CD8-positive, alpha-beta memory T cell (primary cell): ENCODE measurements at regions of chr9 and their contacts with region 1.

Region 1: GRCh38 chr9:6549106-6549800 is 96.3 kb downstream of the GLDC start:
- DNase-seq: no peak
- H3K4me3 ChIP-seq: no peak overlapping the region
- H3K4me3 Mint-ChIP-seq: no peak overlapping the region
- H3K27ac ChIP-seq: no peak overlapping the region
- H3K27ac Mint-ChIP-seq: no peak overlapping the region
- H3K4me1 ChIP-seq: no peaks in the 10 kb centered on the region
- H3K4me1 Mint-ChIP-seq: no peaks in the 10 kb centered on the region
- H3K27me3 ChIP-seq: no peaks in the 10 kb centered on the region
- H3K27me3 Mint-ChIP-seq: peaks cover 0 to 3% of the 10 kb centered on the region in 2 donors

Region 2: DNA sequence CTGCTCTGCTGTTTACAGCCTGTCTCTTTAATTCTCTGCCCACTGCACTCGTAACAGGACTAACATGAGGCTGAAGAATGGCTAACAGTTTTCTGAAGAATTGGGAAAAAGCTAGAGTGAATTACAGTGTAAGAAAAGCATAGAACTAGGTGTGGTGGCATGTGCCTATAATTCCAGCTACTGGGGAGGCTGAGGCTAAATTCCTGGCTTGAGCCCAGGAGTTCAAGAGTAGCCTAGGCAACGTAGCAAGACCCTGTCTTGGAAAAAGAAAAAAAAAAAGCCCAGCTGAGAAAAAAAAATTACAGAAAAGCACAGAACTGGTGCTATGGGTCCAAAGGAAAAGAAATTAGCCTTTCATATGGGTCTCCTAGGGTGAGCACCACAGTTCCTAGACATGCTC is 150.2 kb before region 1 on chr9:
- CTCF ChIA-PET with region 1: no interaction called
- POLR2A ChIA-PET with region 1: no interaction called
- DNase-seq: no peak
- H3K4me3 ChIP-seq: no peak overlapping the region
- H3K4me3 Mint-ChIP-seq: no peak overlapping the region
- H3K27ac ChIP-seq: no peak overlapping the region
- H3K27ac Mint-ChIP-seq: no peak overlapping the region
- H3K4me1 ChIP-seq: no peaks in the 10 kb centered on the region
- H3K4me1 Mint-ChIP-seq: no peaks in the 10 kb centered on the region
- H3K27me3 ChIP-seq: no peaks in the 10 kb centered on the region
- H3K27me3 Mint-ChIP-seq: peaks cover 3 to 4% of the 10 kb centered on the region in 2 donors

Region 3: DNA sequence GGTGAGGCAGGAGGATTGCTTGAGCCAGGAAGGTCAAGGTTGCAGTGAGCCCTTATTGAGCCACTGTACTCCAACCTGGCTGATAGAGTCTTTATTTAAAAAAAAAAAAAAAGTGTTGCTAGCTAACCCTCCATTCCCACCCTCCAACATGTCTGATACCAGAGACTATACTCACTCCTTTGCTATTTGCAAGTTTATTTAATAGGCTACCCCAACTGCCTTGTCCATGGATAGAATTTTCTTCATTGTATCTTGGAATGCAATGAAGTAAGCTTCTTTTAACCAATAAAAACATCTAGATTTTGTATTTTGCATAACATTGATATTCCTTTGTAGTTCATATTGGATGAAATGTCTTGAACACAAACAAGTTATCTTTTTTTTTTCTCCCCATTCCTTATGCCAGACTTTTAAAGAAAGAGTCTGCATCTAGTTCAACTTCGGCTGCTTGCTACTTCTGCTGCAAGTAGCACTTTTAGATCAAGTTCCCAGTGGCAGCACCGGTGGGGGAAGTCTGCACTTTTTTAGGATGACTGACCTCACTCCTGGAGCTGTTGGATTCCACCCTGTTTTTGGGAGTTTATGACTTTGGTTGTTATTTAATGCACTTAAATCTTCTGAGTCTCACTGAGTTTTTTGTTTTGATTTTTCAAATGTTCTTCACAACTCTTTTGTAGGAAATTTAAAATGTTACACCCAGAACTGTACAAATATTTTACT is 23.8 kb before region 1 on chr9:
- CTCF ChIA-PET with region 1: no interaction called
- POLR2A ChIA-PET with region 1: interaction called, 16 read pairs
- DNase-seq: no peak
- H3K4me3 ChIP-seq: no peak overlapping the region
- H3K4me3 Mint-ChIP-seq: no peak overlapping the region
- H3K27ac ChIP-seq: no peak overlapping the region
- H3K27ac Mint-ChIP-seq: no peak overlapping the region
- H3K4me1 ChIP-seq: no peaks in the 10 kb centered on the region
- H3K4me1 Mint-ChIP-seq: no peaks in the 10 kb centered on the region
- H3K27me3 ChIP-seq: no peaks in the 10 kb centered on the region
- H3K27me3 Mint-ChIP-seq: no peaks in the 10 kb centered on the region

Region 4: DNA sequence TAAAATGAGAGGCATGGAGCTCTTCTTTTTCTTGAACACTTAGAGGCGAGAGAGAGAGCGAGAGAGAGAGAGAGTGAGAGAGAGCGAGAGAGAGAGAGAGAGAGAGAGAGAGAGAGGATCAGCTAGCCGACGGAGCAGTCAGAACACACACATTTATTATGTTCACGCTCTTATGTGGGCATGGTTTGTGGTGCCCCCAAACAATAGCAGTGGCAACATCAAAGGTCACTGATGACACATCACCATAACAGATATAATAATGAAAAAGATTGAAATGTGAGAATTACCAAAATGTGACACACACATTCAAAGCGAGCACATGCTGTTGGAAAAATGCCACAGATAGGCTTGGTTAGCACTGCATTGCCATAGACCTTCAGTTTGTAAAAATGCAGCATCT is 324.6 kb after region 1 on chr9:
- CTCF ChIA-PET with region 1: no interaction called
- POLR2A ChIA-PET with region 1: no interaction called
- DNase-seq: peak in 3 of 5 donors; percentile 29 to 68 (median 51)
- H3K4me3 ChIP-seq: no peak overlapping the region
- H3K4me3 Mint-ChIP-seq: peak overlapping the region; percentile 21 to 53 (median 40)
- H3K27ac ChIP-seq: no peak overlapping the region
- H3K27ac Mint-ChIP-seq: peak overlapping the region in 7 of 8 donors; percentile 1 to 68 (median 39)
- H3K4me1 ChIP-seq: no peaks in the 10 kb centered on the region
- H3K4me1 Mint-ChIP-seq: peaks cover 74 to 91% (median 85%) of the 10 kb centered on the region in 3 donors
- H3K27me3 ChIP-seq: no peaks in the 10 kb centered on the region
- H3K27me3 Mint-ChIP-seq: no peaks in the 10 kb centered on the region